ENCODE measurements at regions of chr2 and their contacts with region 1.

Region 1: GRCh38 chr2:24827321-24828237 is 34.4 kb downstream of the CENPO start:
- DNase-seq: peak; percentile 29
- H3K4me3 ChIP-seq: no peak overlapping the region
- H3K27me3 ChIP-seq: no peaks in the 10 kb centered on the region
- CTCF ChIP-seq: peak; percentile 93

Region 2: GRCh38 chr2:24404491-24404921 is 423.1 kb before region 1 on chr2:
- CTCF ChIA-PET with region 1: interaction called, 76 read pairs
- POLR2A ChIA-PET with region 1: no interaction called
- DNase-seq: no peak
- H3K4me3 ChIP-seq: no peak overlapping the region
- H3K27me3 ChIP-seq: peaks cover 2% of the 10 kb centered on the region; the same call in 1 of the 2 replicates
- CTCF ChIP-seq: no peak

Region 3: DNA sequence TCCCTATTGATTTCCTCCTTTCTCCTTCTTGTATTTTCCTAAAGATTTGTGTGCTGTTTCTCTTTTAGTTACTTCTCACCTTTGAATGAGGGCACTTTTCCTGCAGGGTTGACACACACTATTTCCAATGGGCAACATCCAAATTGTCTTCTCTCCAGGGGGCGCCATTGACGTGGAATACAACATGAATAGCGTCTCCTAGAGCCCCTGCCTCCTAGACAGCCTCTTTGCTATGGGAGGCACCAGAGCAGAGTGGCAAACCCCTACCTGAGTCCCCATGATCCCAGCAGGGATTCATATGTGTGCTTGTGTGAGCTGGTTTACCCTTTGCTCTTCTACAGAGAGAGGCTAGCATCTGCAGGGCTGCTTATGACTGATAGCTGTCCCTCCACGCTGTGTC is 405.9 kb before region 1 on chr2:
- CTCF ChIA-PET with region 1: interaction called, 76 read pairs
- POLR2A ChIA-PET with region 1: no interaction called
- DNase-seq: no peak
- H3K4me3 ChIP-seq: no peak overlapping the region
- H3K27me3 ChIP-seq: peaks cover 3% of the 10 kb centered on the region
- CTCF ChIP-seq: peak; percentile 55

Region 4: GRCh38 chr2:24613154-24613814 is 214.3 kb before region 1 on chr2:
- CTCF ChIA-PET with region 1: interaction called, 34 read pairs
- POLR2A ChIA-PET with region 1: no interaction called
- DNase-seq: peak; percentile 0
- H3K4me3 ChIP-seq: no peak overlapping the region
- H3K27me3 ChIP-seq: no peaks in the 10 kb centered on the region
- CTCF ChIP-seq: peak; percentile 62

Region 5: DNA sequence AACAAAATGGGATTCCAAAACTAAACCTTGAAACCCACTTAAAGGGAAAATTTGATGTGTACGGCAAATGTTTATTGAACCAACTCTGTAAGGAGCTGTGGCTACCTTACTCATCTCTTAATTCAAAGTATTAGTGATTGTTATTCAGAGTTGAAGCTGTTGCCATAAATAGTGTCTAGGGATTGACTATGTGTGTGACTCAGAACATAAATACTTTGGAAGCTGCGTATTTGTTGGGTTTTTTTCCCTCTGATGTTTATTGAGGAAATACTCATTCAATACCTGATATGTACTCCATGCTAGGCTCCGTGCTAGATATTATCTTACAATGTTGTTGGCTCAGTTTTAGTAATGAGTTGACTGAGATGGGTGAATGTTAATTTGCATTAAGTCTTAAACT is 124.8 kb before region 1 on chr2:
- CTCF ChIA-PET with region 1: no interaction called
- POLR2A ChIA-PET with region 1: no interaction called
- DNase-seq: peak; percentile 88
- H3K4me3 ChIP-seq: no peak overlapping the region
- H3K27me3 ChIP-seq: no peaks in the 10 kb centered on the region
- CTCF ChIP-seq: no peak

Region 6: GRCh38 chr2:24816884-24817283 is 10.7 kb before region 1 on chr2:
- CTCF ChIA-PET with region 1: interaction called, 19 read pairs
- POLR2A ChIA-PET with region 1: no interaction called
- DNase-seq: no peak
- H3K4me3 ChIP-seq: no peak overlapping the region
- H3K27me3 ChIP-seq: no peaks in the 10 kb centered on the region
- CTCF ChIP-seq: no peak